ENCODE measurements at regions of chr14 and their contacts with region 1.

Region 1: GRCh38 chr14:91323671-91324605 is 79.4 kb upstream of the GPR68 start:
- DNase-seq: peak; percentile 93
- H3K4me3 Mint-ChIP-seq: peak overlapping the region; percentile 75
- H3K27ac Mint-ChIP-seq: peak overlapping the region; percentile 98
- H3K4me1 Mint-ChIP-seq: peaks cover 74% of the 10 kb centered on the region
- H3K27me3 Mint-ChIP-seq: no peaks in the 10 kb centered on the region

Region 2: DNA sequence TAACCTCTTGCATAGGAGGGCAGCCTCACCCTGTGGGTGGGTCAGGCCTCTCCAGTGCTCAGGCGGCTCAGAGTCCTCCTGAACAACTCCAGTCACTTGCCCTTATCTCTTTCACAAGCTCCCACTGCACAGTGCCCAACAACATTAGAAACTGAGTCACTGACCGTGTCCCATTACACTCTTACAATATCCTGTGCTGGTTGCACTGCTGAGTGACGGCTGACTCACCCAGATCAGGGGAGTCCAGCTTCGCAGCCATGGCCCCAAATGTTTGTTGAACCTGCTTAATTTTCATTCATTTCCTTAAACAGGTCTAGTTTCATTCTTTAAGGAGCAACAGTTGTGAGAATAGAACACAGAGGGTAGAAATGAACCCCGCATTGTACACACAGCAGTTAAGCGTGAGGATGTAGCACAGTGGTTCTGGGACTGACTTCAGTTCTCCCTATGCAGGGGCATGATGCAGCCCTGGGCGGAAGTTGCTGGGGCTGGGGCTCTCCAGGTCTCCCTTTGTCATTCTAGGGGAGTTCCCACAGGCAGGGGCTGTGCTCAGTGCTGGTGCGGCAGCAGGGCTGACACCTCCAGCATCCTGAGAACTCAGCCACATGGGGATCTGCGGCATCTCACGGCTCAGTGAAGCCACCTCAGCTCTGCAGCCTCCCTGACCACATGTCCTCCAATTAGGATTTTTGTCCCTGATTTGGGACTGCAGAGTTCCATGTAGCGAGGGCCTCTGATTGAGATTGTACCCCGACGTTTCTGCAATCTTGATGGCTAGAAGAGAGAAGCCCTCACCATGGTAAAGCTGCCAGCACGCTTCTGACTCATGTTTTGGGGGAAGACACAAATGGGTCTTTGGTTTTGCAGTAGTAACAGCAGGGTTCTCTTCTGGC is 95.6 kb before region 1 on chr14:
- CTCF ChIA-PET with region 1: no interaction called
- POLR2A ChIA-PET with region 1: no interaction called
- DNase-seq: peak; percentile 84
- H3K4me3 Mint-ChIP-seq: peak overlapping the region; percentile 64
- H3K27ac Mint-ChIP-seq: peak overlapping the region; percentile 99
- H3K4me1 Mint-ChIP-seq: peaks cover 90% of the 10 kb centered on the region
- H3K27me3 Mint-ChIP-seq: no peaks in the 10 kb centered on the region

Region 3: GRCh38 chr14:91341751-91342154 is 17.8 kb after region 1 on chr14:
- CTCF ChIA-PET with region 1: interaction called, 15 read pairs
- POLR2A ChIA-PET with region 1: no interaction called
- DNase-seq: no peak
- H3K4me3 Mint-ChIP-seq: no peak overlapping the region
- H3K27ac Mint-ChIP-seq: no peak overlapping the region
- H3K4me1 Mint-ChIP-seq: peaks cover 15% of the 10 kb centered on the region
- H3K27me3 Mint-ChIP-seq: no peaks in the 10 kb centered on the region

Region 4: DNA sequence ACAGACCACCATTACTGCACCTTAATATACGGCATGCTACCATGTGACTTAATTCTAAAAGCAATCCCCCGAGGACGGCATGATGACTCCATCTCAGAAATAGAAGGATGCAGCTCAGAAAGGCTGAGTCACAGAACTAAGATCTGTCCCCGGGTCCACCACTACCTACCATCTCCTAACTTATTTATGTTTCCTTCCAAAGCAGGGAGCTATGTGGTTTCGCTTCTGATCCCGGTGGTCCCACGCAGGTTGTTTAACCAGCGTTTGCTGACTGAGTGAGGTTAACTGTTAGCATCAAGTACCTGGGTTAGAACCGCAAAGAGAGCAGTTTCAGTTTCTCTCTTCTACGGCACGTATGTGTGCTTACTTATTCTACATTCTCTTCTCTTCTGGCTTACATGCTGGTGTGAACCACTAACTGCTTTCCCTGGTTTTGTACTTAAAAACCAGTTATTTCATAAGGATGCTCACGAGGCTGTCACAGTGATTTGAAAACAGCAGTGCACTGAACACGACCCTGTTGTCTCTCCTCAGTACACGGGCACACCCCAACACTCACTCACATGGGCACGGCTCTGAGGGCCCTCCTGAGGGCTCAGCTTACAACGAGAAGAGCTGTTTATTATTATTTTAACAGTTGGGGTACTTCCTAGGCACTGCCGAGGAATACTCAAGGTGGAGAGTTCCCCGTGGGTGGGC is 27.0 kb after region 1 on chr14:
- CTCF ChIA-PET with region 1: interaction called, 16 read pairs
- POLR2A ChIA-PET with region 1: no interaction called
- DNase-seq: peak; percentile 81
- H3K4me3 Mint-ChIP-seq: peak overlapping the region; percentile 75
- H3K27ac Mint-ChIP-seq: peak overlapping the region; percentile 94
- H3K4me1 Mint-ChIP-seq: peaks cover 91% of the 10 kb centered on the region
- H3K27me3 Mint-ChIP-seq: no peaks in the 10 kb centered on the region

Region 5: GRCh38 chr14:91396959-91397815 is 73.2 kb after region 1 on chr14:
- CTCF ChIA-PET with region 1: interaction called, 13 read pairs
- POLR2A ChIA-PET with region 1: no interaction called
- DNase-seq: peak; percentile 84
- H3K4me3 Mint-ChIP-seq: peak overlapping the region; percentile 59
- H3K27ac Mint-ChIP-seq: peak overlapping the region; percentile 85
- H3K4me1 Mint-ChIP-seq: peaks cover 96% of the 10 kb centered on the region
- H3K27me3 Mint-ChIP-seq: no peaks in the 10 kb centered on the region

Region 6: GRCh38 chr14:91402771-91403600 is 79.0 kb after region 1 on chr14:
- CTCF ChIA-PET with region 1: interaction called, 13 read pairs
- POLR2A ChIA-PET with region 1: no interaction called
- DNase-seq: no peak
- H3K4me3 Mint-ChIP-seq: peak overlapping the region; percentile 38
- H3K27ac Mint-ChIP-seq: peak overlapping the region; percentile 78
- H3K4me1 Mint-ChIP-seq: peaks cover 93% of the 10 kb centered on the region
- H3K27me3 Mint-ChIP-seq: no peaks in the 10 kb centered on the region

Region 7: GRCh38 chr14:91418387-91419043 is 94.6 kb after region 1 on chr14:
- CTCF ChIA-PET with region 1: interaction called, 33 read pairs
- POLR2A ChIA-PET with region 1: interaction called, 6 read pairs
- DNase-seq: peak; percentile 80
- H3K4me3 Mint-ChIP-seq: peak overlapping the region; percentile 65
- H3K27ac Mint-ChIP-seq: peak overlapping the region; percentile 88
- H3K4me1 Mint-ChIP-seq: peaks cover 36% of the 10 kb centered on the region
- H3K27me3 Mint-ChIP-seq: no peaks in the 10 kb centered on the region

Region 8: DNA sequence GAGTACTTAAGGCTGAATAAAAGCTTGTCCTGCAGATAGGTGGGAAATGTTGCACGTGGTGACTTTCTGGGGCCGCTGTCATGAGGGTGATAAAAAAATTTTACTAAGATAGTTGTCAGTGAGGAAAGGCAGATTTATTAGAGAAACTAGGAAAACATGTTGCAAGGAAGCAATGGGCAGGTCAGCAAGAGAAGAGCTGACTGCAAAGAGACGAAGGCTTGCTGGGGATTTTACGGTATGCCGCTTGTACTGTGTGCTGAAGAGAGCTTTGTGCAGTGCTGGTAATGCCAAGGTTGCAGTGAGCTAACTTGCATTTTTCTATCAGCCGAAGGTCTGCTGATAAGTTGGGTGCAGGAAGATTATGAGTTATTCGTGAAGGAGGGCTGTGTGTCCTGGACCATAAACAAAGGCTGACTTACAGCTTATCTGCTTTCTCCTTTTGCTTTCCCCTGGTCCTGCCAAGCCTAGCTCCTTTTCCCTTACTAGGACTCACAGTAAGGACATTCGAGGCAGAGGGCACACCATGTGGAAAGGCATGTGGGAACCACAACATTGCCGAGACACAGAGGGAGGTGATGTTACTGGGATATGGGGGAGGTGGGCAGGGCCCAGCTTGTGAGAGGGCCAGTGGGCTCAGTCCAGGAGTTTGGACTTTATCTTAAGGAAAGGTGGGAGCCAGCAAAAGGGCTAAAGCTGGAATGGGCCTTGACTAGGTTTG is 101.0 kb after region 1 on chr14:
- CTCF ChIA-PET with region 1: interaction called, 13 read pairs
- POLR2A ChIA-PET with region 1: no interaction called
- DNase-seq: peak; percentile 3
- H3K4me3 Mint-ChIP-seq: no peak overlapping the region
- H3K27ac Mint-ChIP-seq: no peak overlapping the region
- H3K4me1 Mint-ChIP-seq: peaks cover 27% of the 10 kb centered on the region
- H3K27me3 Mint-ChIP-seq: no peaks in the 10 kb centered on the region

Measured in activated CD4-positive, alpha-beta T cell treated with anti-CD3 and anti-CD28 coated beads, Interleukin-2, amount 10 ng/mL, durations not matched to agents 7 days and 5 days (primary cell).